Posterior cingulate gyrus (tissue), 11 donors: ENCODE measurements at regions of chr5 and their contacts with region 1.

Region 1: DNA sequence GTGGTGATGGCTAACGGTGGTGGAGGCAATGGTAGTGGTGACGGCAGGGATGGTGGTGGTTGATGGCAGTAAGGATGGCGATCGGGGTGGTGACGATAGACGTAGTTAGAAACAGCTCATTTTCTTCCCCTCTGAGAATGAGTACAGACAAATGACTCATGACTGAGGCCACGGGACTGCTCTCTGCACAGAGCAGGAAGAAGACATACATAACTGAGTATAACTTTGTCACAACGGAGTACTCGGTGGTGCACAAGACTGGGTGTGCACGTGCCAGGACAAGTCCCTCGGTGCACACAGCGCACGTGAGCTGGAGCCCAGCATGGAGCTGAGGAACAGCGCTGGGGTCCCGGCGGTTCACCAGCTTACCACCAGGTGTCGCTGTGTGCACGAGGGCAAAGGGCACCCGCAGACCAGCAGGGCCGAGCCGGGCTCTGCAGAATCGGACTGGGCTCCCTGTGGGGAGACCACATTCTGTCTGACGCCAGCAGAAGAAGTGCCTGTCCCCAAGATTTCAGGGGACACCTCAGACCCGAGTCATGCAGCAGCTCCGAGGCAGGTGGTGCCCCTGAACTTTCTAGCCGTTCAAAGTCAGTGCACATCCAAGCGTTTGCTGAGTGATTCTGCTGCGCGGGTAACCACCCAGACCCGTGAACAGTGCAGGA is 188.6 kb downstream of the FSTL4 start:
- DNase-seq: peak in 9 of 10 donors; percentile 43 to 93 (median 70)

Region 2: DNA sequence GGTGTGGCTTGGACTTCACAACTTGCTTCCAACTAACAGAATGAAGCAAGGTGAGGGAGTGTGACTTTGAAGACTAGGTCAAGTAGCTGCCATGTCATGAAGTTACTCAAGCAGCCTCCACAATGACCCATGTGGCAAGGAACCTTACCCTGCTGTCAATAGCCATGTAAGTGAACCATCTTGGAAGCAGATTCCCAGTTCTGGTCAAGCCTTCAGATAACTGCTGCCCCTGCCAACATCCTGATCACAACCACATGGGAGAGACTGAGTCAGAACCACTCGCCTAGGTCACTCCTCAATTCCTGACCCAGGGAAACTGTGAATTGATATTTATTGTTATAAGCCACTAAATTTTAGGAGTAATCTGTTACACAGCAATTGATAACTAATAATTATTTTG is 408.3 kb before region 1 on chr5:
- intact Hi-C with region 1: no loop called
- DNase-seq: no peak

Region 3: GRCh38 chr5:133316427-133316826 is 107.3 kb before region 1 on chr5:
- intact Hi-C with region 1: no loop called
- DNase-seq: peak in 1 of 10 donors; percentile 57

Region 4: DNA sequence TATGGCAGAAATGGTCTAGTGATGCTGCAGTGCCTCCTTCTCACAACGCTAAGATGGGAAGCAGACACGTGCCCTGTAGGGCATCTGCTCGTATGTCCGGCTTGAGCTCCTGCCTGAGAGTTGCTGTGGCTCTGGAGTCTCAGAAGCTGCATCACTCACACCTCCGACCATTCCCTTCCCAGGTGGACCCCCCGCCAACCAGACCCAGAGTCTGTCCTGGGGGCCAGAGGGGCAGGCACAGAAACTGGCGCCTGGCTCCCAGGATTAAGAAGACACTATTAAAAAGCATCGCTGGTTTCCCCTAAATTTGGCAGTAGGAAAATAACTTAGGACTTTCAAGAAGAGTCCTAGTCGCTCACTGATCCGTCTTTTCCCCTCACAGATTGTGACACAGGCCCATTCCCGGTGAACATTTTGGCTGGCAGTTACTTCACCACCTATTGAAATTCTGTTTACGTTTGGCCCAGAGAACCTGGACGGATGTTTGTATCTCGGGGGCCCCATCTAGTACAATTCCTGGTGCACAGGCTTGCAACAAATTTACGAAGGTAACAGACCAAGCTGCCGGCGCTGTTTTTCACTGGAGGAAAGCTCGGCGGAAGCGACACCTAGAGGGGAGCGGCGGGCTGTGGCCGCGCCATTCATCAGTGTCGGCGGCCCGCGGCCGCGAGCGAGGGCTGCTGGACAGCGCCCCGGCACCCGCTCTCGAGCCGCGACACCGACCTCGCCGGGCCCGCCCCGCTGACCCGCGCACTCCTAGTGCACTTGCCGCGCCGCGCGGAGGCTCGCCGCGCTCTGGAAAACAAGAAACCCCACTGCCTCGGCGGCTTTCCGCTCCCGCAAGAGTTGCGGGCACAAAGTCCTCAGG is 187.0 kb after region 1 on chr5:
- intact Hi-C with region 1: loop called (anchors 2 kb)
- DNase-seq: peak; percentile 41 to 95 (median 70)

Region 5: DNA sequence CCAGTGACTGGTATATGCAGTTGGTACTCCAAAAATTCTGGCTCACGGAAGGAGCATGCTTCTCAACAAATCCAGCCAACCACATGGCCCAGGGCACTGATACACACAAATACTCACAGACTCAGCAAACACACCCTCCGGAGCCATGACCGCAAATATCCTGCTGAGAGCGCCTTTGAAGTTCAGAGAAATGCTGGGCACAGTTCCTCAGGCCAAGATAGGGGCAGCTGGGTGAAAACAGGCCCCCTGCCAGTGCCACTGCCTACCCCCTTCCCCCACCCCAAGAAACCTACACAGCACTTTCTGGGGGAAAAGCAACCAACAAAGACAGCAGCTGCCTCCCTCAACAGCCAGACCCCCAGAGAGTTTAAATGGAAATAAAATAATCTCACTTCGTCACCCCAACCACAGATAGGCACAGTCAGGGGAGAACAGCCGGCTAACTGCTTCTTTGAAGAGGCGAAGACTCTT is 424.6 kb after region 1 on chr5:
- intact Hi-C with region 1: no loop called
- DNase-seq: no peak

Region 6: DNA sequence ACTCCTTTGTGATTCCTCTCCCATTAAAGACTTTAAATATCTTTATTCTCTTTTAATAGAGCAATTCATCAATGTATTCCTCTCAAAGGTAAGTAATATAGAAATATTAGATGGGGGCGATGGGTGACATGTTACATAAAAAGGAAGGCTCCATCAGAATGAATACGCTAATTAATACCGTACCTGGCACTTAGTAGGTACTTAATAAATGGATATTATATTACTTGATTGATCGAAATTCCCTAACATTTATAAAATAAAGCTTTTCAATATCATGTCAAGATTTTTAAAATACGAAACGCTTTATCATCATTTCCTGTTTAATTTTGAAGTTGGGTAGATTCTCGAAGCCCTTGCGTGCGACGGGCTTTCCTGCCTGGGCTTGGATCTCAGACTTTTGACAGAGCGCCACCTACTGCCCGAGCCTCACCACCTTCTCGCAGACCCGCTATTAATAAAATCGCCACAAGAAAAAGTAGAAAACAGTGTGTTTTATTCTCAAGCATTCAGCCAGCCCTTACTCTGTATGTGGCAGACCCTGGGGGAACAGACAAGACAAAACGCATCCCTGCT is 445.3 kb after region 1 on chr5:
- intact Hi-C with region 1: loop called (anchors 10 kb)
- DNase-seq: peak; percentile 52 to 96 (median 76)